ENCODE measurements at regions of chr10 and their contacts with region 1.

Region 1: DNA sequence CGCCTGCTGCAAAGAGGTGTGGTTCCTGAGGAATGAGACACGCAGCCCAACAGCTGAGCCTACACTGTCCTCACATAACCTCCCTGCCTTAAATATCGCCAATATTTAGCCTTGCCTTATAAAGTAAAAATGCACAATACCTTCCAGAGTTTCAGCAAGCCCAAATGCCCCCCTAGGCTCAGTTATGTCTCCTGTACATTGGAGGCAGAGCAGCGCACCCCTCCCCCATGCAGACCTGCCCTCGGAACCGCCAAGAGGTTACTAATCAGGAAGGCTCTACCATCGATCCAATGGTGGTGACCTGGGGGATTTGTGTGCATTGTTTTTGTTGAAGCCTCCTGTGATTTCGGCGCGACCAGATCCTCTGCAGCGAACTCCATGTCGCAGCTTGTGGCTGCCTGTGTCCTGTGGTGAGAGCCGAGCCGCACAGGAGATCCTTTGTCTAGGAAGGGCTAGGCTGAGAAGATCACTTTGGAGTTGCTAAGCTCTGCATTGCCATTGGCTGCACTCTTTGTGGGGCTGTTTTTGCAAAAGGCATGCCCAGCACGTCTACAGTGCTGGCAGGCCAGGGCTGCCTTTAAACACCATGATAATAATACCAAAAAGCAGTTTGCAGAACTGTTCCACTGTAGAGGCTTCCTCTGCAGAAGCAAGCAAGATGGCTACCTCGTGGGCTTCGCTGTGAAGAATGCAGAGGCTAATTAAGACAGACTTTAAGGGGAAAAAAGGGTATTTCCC is 40.1 kb downstream of the TET1 start:
- DNase-seq: peak; percentile 54
- H3K4me3 ChIP-seq: peak overlapping the region; percentile 61
- H3K27ac ChIP-seq: peak overlapping the region; percentile 92
- H3K27me3 ChIP-seq: no peaks in the 10 kb centered on the region
- CTCF ChIP-seq: no peak

Region 2: DNA sequence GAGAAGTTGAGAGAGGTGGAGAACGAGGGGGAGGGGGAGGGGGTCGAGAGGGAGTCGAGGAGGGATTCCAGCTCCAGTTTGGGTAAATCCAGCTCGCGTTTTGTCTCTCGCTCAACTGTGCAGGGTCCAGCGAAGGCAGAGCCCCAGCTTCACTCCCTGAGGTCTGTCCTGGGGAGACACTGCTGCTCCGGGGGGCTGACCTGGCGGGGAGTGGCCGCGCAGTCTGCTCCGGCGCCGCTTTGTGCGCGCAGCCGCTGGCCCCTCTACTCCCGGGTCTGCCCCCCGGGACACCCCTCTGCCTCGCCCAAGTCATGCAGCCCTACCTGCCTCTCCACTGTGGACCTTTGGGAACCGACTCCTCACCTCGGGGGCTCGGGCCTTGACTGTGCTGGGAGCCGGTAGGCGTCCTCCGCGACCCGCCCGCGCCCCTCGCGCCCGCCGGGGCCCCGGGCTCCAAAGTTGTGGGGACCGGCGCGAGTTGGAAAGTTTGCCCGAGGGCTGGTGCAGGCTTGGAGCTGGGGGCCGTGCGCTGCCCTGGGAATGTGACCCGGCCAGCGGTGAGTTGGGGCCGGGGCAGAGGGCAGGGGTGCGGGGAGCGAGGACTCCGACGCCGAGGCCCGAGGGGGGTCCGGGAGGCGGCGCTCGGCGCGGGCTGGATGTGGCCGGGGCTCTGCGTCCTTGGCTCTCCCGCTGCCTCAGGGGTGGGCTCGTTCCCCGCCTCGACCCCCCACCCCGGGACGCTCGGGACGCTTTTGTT is 39.8 kb before region 1 on chr10 and contains the start of gene TET1:
- CTCF ChIA-PET with region 1: no interaction called
- POLR2A ChIA-PET with region 1: interaction called, 21 read pairs
- DNase-seq: no peak
- H3K4me3 ChIP-seq: peak within 1 kb of the TSS; percentile 77
- H3K27ac ChIP-seq: peak within 1 kb of the TSS; percentile 31
- H3K27me3 ChIP-seq: no peaks in the 10 kb centered on the region
- CTCF ChIP-seq: no peak
- polyA plus RNA-seq, gene TET1: 2.4 and 3.4 TPM in 2 replicates

Region 3: GRCh38 chr10:69004821-69005220 is 404.6 kb after region 1 on chr10:
- CTCF ChIA-PET with region 1: no interaction called
- POLR2A ChIA-PET with region 1: no interaction called
- DNase-seq: peak; percentile 24
- H3K4me3 ChIP-seq: no peak overlapping the region
- H3K27ac ChIP-seq: no peak overlapping the region
- H3K27me3 ChIP-seq: no peaks in the 10 kb centered on the region
- CTCF ChIP-seq: peak; percentile 63

Measured in AG04450 (cell line).